IMR-90 (cell line): ENCODE measurements at regions of chr5 and their contacts with region 1.

Region 1: DNA sequence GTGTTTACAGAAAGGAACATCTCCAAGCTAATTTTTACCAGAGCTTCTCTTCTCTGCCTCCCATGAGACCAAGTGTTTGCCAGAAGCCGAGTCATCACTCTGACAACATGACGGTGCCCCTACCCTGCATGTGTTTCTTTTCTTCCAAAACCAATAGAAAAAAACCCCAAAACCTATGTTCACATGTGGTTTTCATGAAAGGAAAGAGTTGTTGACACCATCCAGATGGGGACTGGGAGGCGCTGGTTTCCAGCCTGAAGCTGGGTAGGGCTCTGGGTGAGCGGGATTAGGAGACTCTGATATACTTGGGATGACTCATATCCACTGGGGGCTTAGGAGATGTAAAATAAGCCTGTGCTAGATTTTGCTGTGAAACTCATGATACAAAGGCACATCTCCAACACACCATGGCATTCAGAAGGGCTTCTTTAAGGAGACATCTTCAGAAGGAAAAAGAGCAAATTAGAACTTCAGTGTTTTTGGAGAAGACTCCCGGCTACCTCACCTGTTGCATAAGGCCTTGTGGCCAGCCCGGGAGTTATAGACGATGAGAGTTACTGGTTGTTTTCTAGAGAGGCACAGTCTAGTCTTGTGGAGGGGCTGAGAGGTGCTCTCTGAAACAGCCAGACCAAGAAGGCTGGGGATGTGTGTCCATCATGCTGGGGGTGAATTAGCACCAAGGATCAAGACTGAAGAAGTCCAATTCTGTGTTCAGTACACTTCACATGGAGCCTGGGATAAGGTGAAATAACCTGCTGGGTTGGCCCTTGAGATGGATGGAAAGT is 108.9 kb upstream of the LHFPL2 start:
- DNase-seq: peak; percentile 69
- ATAC-seq: peak; percentile 19; the same call in 1 of the 2 replicates
- H3K4me3 ChIP-seq: no peak overlapping the region
- H3K27ac ChIP-seq: peak overlapping the region; percentile 48; the same call in 1 of the 2 replicates
- H3K4me1 ChIP-seq: peaks cover 24% of the 10 kb centered on the region
- H3K27me3 ChIP-seq: peaks cover 23% of the 10 kb centered on the region
- CTCF ChIP-seq: no peak
- POLR2A ChIP-seq: no peak
- RAD21 ChIP-seq: no peak

Region 2: DNA sequence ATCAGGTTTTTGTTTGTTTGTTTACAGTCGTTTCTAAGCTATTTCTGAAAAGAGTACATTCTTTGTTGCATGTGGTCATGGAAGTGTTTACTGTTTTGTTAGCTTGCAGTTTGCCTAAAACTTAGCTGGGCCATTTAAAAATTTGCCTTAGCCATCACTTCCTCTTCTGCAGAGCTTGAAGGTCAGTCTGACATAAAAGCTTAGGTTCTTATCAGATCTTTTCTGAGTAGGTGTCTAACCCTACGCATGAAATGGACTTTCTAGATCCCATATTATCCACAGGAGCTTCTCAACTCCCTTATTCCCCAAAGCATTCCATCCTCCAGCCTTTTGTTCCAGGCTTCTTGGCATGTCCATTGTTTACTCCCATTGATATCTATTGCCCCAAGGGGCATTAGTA is 553.2 kb before region 1 on chr5:
- CTCF ChIA-PET with region 1: no interaction called
- POLR2A ChIA-PET with region 1: no interaction called
- dilution Hi-C with region 1: no loop called
- in situ Hi-C with region 1: no loop called
- intact Hi-C with region 1: no loop called
- DNase-seq: no peak
- ATAC-seq: no peak
- H3K4me3 ChIP-seq: no peak overlapping the region
- H3K27ac ChIP-seq: no peak overlapping the region
- H3K4me1 ChIP-seq: no peaks in the 10 kb centered on the region
- H3K27me3 ChIP-seq: no peaks in the 10 kb centered on the region
- CTCF ChIP-seq: no peak
- POLR2A ChIP-seq: no peak
- RAD21 ChIP-seq: no peak

Region 3: GRCh38 chr5:78594610-78595457 is 162.6 kb before region 1 on chr5:
- CTCF ChIA-PET with region 1: no interaction called
- POLR2A ChIA-PET with region 1: no interaction called
- dilution Hi-C with region 1: no loop called
- in situ Hi-C with region 1: no loop called
- intact Hi-C with region 1: no loop called
- DNase-seq: peak; percentile 100
- ATAC-seq: peak; percentile 71
- H3K4me3 ChIP-seq: no peak overlapping the region
- H3K27ac ChIP-seq: peak overlapping the region; percentile 81
- H3K4me1 ChIP-seq: peaks cover 40% of the 10 kb centered on the region
- H3K27me3 ChIP-seq: no peaks in the 10 kb centered on the region
- CTCF ChIP-seq: 0 out of 2 replicates have a peak, but pooled peaks have one; percentile 17
- POLR2A ChIP-seq: peak; percentile 61
- RAD21 ChIP-seq: peak; percentile 11; the same call in 1 of the 2 replicates

Region 4: DNA sequence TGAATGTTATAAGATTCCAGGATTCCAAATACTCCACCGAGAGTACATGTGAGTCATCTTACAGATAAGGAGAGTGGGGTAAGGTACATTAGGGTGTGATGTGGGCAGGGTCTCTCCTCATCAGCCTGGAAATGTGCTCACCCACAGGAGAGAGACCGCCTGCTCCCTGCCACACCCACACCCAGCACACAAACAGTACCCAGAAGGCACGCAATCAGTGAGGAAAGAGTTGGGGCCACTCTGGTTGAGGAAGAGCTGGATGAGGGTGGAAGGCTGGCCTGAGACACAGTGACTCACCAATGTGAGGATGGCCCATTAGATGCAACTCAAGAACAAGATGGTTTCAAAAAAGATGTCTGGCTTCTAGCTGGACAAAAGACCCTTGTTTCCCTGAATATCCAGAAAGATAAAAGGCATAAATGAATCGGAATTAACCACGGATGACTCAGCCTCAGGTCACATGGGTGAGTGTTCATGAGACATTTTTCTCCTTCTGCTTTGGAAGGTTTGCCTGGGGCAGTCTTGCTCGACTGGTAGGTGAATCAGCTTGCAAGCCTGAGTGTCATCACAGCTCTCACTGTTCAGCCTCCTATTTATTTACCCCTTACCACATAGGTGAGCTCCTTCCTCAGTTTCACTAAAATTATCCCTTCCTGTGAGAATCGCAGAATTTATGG is 57.8 kb before region 1 on chr5:
- CTCF ChIA-PET with region 1: no interaction called
- POLR2A ChIA-PET with region 1: interaction called, 12 read pairs
- dilution Hi-C with region 1: no loop called
- in situ Hi-C with region 1: no loop called
- intact Hi-C with region 1: no loop called
- DNase-seq: peak; percentile 97
- ATAC-seq: peak; percentile 91
- H3K4me3 ChIP-seq: no peak overlapping the region
- H3K27ac ChIP-seq: peak overlapping the region; percentile 52
- H3K4me1 ChIP-seq: peaks cover 10% of the 10 kb centered on the region
- H3K27me3 ChIP-seq: no peaks in the 10 kb centered on the region
- CTCF ChIP-seq: no peak
- POLR2A ChIP-seq: no peak
- RAD21 ChIP-seq: 0 out of 2 replicates have a peak, but pooled peaks have one; percentile 15

Region 5: GRCh38 chr5:78727786-78728761 is 29.4 kb before region 1 on chr5:
- CTCF ChIA-PET with region 1: interaction called, 3 read pairs
- POLR2A ChIA-PET with region 1: interaction called, 15 read pairs
- dilution Hi-C with region 1: no loop called
- in situ Hi-C with region 1: no loop called
- intact Hi-C with region 1: no loop called
- DNase-seq: no peak
- ATAC-seq: no peak
- H3K4me3 ChIP-seq: no peak overlapping the region
- H3K27ac ChIP-seq: no peak overlapping the region
- H3K4me1 ChIP-seq: peaks cover 4% of the 10 kb centered on the region; the same call in 1 of the 2 replicates
- H3K27me3 ChIP-seq: no peaks in the 10 kb centered on the region
- CTCF ChIP-seq: no peak
- POLR2A ChIP-seq: no peak
- RAD21 ChIP-seq: no peak